HEK293 (cell line): ENCODE measurements at regions of chr14 and their contacts with region 1.

Region 1: DNA sequence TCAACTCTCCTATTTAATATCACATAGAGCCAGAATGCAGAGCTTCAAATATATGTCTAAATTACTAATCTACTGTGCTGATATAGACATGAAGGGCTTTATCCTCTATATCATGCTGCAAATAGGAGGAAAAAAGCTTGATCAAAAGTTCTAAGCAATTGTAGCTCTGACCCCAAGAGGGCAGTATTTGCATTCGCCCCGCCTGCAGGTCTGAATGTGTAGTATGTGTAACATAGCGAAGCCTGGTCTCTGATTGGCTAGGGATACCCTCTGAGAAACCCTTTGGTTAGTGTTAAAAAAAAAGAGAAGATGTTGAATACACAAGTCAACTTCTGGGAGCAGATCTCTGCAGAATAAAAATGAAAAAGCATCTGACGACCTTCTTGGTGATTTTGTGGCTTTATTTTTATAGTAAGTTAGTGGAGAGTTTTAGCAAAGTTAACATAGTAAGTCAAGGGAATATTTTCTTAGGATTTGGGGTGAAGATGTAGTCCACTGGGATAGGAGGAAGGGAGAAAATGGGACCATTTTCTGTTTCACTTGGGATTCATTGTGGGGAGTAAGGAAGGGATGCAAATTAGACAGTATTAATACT is 151.6 kb upstream of the OR4E1 start:
- H3K4me3 ChIP-seq: no peak overlapping the region
- H3K27ac ChIP-seq: no peak overlapping the region
- H3K4me1 ChIP-seq: peaks cover 3% of the 10 kb centered on the region; the same call in 1 of the 2 replicates
- CTCF ChIP-seq: peak; percentile 46; the same call in 1 of the 2 replicates

Region 2: DNA sequence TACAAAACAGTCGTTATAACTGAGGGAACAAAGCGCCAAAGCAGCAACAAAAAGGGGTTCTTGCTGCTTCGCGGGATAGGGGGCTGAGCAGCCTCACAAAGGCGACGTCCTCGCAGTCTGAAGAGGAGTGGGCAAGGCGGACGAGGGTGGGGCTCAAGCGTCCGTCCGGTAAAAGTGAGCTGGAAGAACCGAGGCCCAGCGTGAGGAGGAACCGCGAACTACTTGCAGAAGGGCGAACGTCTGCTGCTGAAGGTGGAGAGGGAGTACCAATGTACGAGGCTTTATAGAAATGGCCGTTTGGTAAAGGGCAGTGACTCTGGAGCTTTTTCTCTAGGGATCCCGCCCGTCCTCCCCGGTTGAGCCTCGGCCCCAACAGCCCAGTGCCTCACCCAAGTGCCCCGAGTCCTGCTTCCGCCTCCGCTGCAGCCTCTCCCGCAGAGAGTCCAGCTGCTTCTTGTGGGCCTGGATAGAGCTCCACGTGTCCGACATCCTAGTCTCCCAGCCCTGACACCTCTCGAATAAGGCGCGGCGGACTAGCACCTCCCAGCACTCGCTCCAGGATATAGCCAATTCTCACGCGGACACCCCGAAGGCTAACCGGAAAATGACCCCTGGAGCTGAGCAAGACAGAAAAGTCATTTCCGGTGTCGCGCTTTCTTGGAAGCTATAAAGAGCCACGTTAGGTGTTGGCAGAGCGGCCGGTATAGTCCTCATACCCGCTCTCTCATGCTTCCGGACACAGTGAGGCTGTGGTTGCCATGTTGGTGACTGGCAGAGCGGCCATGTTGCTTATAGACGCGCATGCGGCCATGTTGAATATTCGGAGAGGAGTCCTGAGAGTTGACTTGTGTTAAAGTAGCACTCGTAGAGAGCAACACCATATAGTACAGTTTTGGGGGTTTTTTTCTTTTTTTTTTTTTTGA is 314.2 kb before region 1 on chr14 and contains the start of gene METTL3:
- CTCF ChIA-PET with region 1: no interaction called
- POLR2A ChIA-PET with region 1: no interaction called
- H3K4me3 ChIP-seq: peak within 1 kb of the TSS; percentile 77
- H3K27ac ChIP-seq: peak within 1 kb of the TSS; percentile 72
- H3K4me1 ChIP-seq: 0 out of 2 replicates have a peak, but pooled peaks cover 4% of the 10 kb centered on the region
- CTCF ChIP-seq: peak; percentile 26; the same call in 1 of the 2 replicates

Region 3: DNA sequence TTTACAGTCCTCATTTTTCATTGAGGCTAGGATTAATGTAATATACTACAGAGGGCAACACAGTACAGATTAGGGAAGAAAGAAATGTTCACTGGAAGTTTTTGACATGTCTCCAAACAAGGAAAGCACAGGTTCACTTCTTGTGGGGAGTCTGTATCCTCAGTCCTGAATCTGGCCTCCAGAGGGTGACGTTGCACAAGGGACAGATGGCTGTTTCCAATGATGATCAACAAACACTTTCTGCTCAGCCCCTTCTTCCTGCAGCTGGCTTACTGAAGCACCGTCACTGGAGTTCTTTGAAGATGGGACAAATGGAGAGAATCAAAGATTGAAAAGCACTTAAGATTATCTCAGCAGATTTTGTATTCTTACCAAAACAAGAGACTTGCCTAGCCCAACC is 28.3 kb before region 1 on chr14:
- CTCF ChIA-PET with region 1: interaction called, 11 read pairs
- POLR2A ChIA-PET with region 1: no interaction called
- H3K4me3 ChIP-seq: no peak overlapping the region
- H3K27ac ChIP-seq: no peak overlapping the region
- H3K4me1 ChIP-seq: no peaks in the 10 kb centered on the region
- CTCF ChIP-seq: no peak

Region 4: GRCh38 chr14:21846227-21846885 is 21.1 kb after region 1 on chr14:
- CTCF ChIA-PET with region 1: interaction called, 19 read pairs
- POLR2A ChIA-PET with region 1: no interaction called
- H3K4me3 ChIP-seq: no peak overlapping the region
- H3K27ac ChIP-seq: no peak overlapping the region
- H3K4me1 ChIP-seq: no peaks in the 10 kb centered on the region
- CTCF ChIP-seq: peak; percentile 62; the same call in 1 of the 2 replicates